Panc1 (cell line): ENCODE measurements at regions of chr19 and their contacts with region 1.

Region 1: DNA sequence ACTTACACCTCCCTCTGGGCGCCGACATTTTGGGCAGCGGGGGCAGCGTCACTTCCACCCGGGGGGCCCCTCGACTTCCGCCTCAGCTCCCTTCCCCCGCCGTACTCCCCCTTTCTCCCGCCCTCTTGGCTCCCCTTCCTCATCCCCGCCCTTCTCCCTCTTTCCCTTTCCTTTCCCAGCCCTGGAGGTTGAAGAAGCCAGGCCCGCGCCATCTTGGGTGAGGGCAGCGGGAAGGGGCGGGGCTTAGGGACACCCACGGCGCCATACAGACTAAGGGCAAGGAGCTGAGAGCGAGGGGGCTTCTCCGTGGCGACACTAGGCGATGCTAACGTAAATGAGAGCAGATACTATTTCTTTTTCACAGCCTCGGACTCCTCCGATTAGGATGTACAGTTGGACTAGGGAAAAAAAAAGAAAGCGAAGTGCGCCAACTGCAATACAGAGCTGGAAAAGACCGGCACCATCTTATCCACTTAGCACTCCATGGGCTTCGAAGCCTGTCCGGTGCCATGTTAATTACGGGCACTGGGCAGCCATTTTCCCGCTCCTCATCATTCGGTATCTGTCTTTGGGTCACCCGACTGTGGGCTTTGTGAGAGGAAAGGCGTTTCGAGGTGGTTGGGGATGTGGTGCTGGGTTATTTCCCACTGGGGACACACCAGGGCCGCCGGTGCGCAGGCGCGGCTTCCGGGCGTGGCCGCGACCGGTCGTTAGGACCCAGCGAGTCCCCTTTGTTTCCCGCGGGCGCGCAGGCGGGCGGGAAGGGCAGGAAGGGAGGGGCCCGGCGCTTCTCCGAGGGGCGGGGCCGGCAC is at the start of gene FIZ1:
- DNase-seq: peak; percentile 94
- ATAC-seq: peak; percentile 90
- H3K4me3 ChIP-seq: peak within 1 kb of the TSS; percentile 79 to 85
- H3K27ac ChIP-seq: peak within 1 kb of the TSS; percentile 100
- H3K4me1 ChIP-seq: peaks cover 14% of the 10 kb centered on the region
- H3K27me3 ChIP-seq: no peaks in the 10 kb centered on the region
- CTCF ChIP-seq: no peak
- total RNA-seq, gene FIZ1: 28.5 TPM

Region 2: GRCh38 chr19:55503502-55504251 is 96.0 kb before region 1 on chr19:
- CTCF ChIA-PET with region 1: no interaction called
- POLR2A ChIA-PET with region 1: no interaction called
- in situ Hi-C with region 1: no loop called
- intact Hi-C with region 1: no loop called
- DNase-seq: peak; percentile 83
- ATAC-seq: peak; percentile 97
- H3K4me3 ChIP-seq: peak overlapping the region; percentile 39 to 59
- H3K27ac ChIP-seq: peak overlapping the region; percentile 50
- H3K4me1 ChIP-seq: no peaks in the 10 kb centered on the region
- H3K27me3 ChIP-seq: no peaks in the 10 kb centered on the region
- CTCF ChIP-seq: peak; percentile 99

Region 3: DNA sequence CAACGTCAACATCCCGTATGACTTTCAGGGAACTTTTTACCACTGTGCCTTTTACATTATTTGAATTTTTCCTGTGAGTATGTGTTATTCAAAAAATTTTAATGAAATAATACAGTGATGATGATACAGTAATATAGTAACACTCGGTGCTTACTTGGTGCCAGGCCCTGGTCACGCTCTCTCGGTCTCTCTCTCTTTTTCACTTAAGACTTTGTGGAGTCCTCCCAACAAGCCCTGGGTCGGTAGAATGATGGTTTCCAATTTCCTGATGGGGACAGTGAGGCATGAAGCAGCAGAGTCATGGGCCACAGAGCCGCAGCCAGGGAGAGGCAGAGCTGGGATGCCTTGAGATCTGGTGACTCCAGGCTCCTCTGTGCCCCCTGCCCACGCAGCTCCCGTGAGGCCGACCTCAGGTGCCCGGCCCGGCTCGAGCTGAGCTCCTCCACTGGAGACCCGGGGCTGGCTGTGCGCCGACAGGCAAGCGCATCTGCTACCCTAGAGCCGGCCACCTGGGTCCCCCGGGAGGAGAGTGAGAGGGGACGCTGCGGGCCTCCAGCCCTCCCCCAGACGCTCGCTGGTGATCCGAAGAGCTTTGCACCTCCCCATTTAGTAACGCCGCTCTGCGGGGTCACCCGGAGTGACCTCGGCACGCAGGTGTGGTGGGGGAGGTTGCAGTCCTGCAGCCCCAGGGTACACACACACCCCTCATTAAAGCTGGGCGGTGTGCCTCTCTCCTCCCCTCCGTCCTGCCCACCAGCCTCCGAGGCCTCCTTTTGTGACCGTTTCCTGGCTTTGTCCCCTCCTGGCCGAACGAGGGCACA is 50.0 kb before region 1 on chr19:
- CTCF ChIA-PET with region 1: no interaction called
- POLR2A ChIA-PET with region 1: interaction called, 12 read pairs
- in situ Hi-C with region 1: no loop called
- intact Hi-C with region 1: no loop called
- DNase-seq: peak; percentile 87
- ATAC-seq: peak; percentile 69
- H3K4me3 ChIP-seq: peak overlapping the region; percentile 37 to 48
- H3K27ac ChIP-seq: peak overlapping the region; percentile 94
- H3K4me1 ChIP-seq: peaks cover 62% of the 10 kb centered on the region
- H3K27me3 ChIP-seq: no peaks in the 10 kb centered on the region
- CTCF ChIP-seq: no peak

Region 4: DNA sequence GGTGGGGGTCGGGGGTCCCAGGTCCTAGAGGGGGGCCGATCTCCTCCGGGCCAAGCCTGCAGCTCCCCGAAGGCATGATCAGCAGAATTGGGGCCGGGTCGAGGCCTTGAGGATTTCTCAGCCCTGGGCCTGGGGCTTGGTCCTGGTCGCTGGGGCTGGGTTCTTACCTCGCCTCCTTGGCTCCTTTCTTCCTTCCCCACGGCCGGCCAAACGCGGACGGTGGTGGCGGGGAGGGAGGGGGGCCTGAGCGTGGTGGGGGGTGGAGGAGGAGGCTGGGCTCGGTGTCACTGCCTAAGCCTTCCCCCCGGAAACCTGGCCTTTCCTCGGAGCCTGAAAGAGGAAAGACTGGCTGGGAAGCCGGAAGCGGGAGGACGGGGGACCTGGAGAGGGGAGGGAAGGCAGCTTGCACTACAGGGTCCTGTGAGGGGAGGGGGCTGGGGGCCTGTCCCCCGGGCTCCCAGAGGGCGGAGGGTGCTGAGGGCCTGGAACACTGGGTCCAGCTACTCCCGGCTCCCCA is 19.0 kb before region 1 on chr19 and contains the start of gene ZNF579:
- CTCF ChIA-PET with region 1: no interaction called
- POLR2A ChIA-PET with region 1: interaction called, 10 read pairs
- in situ Hi-C with region 1: no loop called
- intact Hi-C with region 1: no loop called
- DNase-seq: peak; percentile 61
- ATAC-seq: peak; percentile 87
- H3K4me3 ChIP-seq: peak within 1 kb of the TSS; percentile 44 to 96
- H3K27ac ChIP-seq: peak within 1 kb of the TSS; percentile 88
- H3K4me1 ChIP-seq: peaks cover 15% of the 10 kb centered on the region
- H3K27me3 ChIP-seq: no peaks in the 10 kb centered on the region
- CTCF ChIP-seq: no peak
- total RNA-seq, gene ZNF579: 39.5 TPM

Region 5: GRCh38 chr19:55720214-55720746 is 120.6 kb after region 1 on chr19:
- CTCF ChIA-PET with region 1: no interaction called
- POLR2A ChIA-PET with region 1: no interaction called
- in situ Hi-C with region 1: no loop called
- intact Hi-C with region 1: no loop called
- DNase-seq: no peak
- ATAC-seq: no peak
- H3K4me3 ChIP-seq: no peak overlapping the region
- H3K27ac ChIP-seq: no peak overlapping the region
- H3K4me1 ChIP-seq: no peaks in the 10 kb centered on the region
- H3K27me3 ChIP-seq: peaks cover 25% of the 10 kb centered on the region
- CTCF ChIP-seq: no peak